Naive thymus-derived CD4-positive, alpha-beta T cell (primary cell): ENCODE measurements at regions of chr10 and their contacts with region 1.

Region 1: DNA sequence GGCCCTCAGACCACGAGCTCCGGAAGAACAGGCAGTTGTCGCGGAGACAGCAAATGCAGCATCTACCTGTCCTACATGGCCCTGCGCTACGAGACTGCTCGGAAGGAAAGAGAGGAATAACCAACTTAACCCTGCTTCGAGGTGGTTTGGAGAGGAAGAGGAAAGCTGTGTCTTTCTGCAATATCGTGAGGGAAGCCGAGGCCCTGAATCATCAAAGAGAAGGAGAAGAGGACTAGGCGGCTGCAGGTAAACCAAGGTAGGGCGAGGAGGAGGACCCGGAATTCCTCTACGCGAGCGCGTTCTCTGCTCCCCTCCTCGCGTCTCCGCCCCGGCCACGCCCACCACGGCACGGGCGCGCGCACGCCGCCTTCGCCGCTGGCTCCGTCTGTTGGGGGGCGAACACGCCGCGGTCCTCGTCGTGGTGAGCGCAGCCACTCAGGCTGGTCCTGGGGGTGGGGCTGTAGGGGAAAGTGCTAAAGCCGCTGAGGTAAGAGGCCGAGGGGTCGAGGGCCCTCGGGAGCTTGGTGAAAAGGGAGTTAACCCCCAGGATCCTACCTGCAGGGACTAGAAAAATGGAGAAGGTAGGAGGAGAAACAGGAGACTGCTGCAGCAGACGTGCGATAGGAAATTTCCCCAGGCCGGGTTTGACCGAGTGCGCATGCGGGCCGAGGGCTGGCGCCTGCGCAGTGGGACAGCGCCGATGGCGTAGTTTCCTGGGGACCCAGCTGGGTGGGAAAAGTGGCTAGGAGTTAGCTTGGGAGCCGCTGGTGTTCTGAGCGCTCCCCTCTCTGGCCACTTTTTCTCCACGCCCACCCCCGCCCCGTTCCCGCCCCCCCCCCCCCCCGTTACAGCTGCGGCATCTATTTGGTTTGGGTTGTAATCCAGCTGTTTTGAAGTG is at the starts of genes ANAPC16 and ASCC1:
- DNase-seq: peak; percentile 90 to 99 (median 97)
- ATAC-seq: peak; percentile 95
- H3K4me3 ChIP-seq: peak within 1 kb of the TSS; percentile 66
- H3K4me3 Mint-ChIP-seq: peak within 1 kb of the TSS; percentile 84 to 100 (median 97)
- H3K27ac ChIP-seq: peak within 1 kb of the TSS; percentile 95
- H3K27ac Mint-ChIP-seq: peak within 1 kb of the TSS; percentile 93 to 100 (median 99)
- H3K4me1 ChIP-seq: peaks cover 22 to 49% of the 10 kb centered on the region in 2 donors
- H3K4me1 Mint-ChIP-seq: peaks cover 14 to 62% (median 47%) of the 10 kb centered on the region in 7 donors
- H3K27me3 ChIP-seq: no peaks in the 10 kb centered on the region
- H3K27me3 Mint-ChIP-seq: no peaks in the 10 kb centered on the region
- total RNA-seq, gene ANAPC16: 85.5 to 131 (median 105) TPM
- total RNA-seq, gene ASCC1: 19.4 to 33.1 (median 24.2) TPM

Region 2: GRCh38 chr10:71359364-71360046 is 856.4 kb before region 1 on chr10:
- CTCF ChIA-PET with region 1: no interaction called
- POLR2A ChIA-PET with region 1: no interaction called
- intact Hi-C with region 1: no loop called
- DNase-seq: no peak
- ATAC-seq: peak; percentile 67
- H3K4me3 ChIP-seq: no peak overlapping the region
- H3K4me3 Mint-ChIP-seq: no peak overlapping the region
- H3K27ac ChIP-seq: no peak overlapping the region
- H3K27ac Mint-ChIP-seq: no peak overlapping the region
- H3K4me1 ChIP-seq: no peaks in the 10 kb centered on the region
- H3K4me1 Mint-ChIP-seq: peaks cover 0 to 4% (median 0%) of the 10 kb centered on the region in 7 donors
- H3K27me3 ChIP-seq: no peaks in the 10 kb centered on the region
- H3K27me3 Mint-ChIP-seq: no peaks in the 10 kb centered on the region

Region 3: GRCh38 chr10:72048450-72049124 is 167.3 kb before region 1 on chr10:
- CTCF ChIA-PET with region 1: interaction called, 28 read pairs
- POLR2A ChIA-PET with region 1: interaction called, 3 read pairs
- intact Hi-C with region 1: loop called in 1 of 2 experiments (anchors 2 kb)
- DNase-seq: peak; percentile 68 to 88 (median 83)
- ATAC-seq: peak; percentile 99
- H3K4me3 ChIP-seq: no peak overlapping the region
- H3K4me3 Mint-ChIP-seq: no peak overlapping the region
- H3K27ac ChIP-seq: no peak overlapping the region
- H3K27ac Mint-ChIP-seq: peak overlapping the region in 6 of 9 donors; percentile 5 to 67 (median 32)
- H3K4me1 ChIP-seq: no peaks in the 10 kb centered on the region
- H3K4me1 Mint-ChIP-seq: peaks cover 7 to 10% (median 8%) of the 10 kb centered on the region in 7 donors
- H3K27me3 ChIP-seq: no peaks in the 10 kb centered on the region
- H3K27me3 Mint-ChIP-seq: no peaks in the 10 kb centered on the region

Region 4: GRCh38 chr10:72126184-72126871 is 89.6 kb before region 1 on chr10:
- CTCF ChIA-PET with region 1: interaction called, 6 read pairs
- POLR2A ChIA-PET with region 1: interaction called, 21 read pairs
- intact Hi-C with region 1: no loop called
- DNase-seq: peak in 1 of 9 donors; percentile 16
- ATAC-seq: no peak
- H3K4me3 ChIP-seq: no peak overlapping the region
- H3K4me3 Mint-ChIP-seq: no peak overlapping the region
- H3K27ac ChIP-seq: no peak overlapping the region
- H3K27ac Mint-ChIP-seq: peak overlapping the region in 4 of 9 donors; percentile 5 to 63 (median 18)
- H3K4me1 ChIP-seq: peaks cover 5 to 10% of the 10 kb centered on the region in 2 donors
- H3K4me1 Mint-ChIP-seq: peaks cover 18 to 54% (median 42%) of the 10 kb centered on the region in 7 donors
- H3K27me3 ChIP-seq: no peaks in the 10 kb centered on the region
- H3K27me3 Mint-ChIP-seq: no peaks in the 10 kb centered on the region

Region 5: GRCh38 chr10:72248468-72249151 is 32.7 kb after region 1 on chr10:
- CTCF ChIA-PET with region 1: interaction called, 3 read pairs
- POLR2A ChIA-PET with region 1: interaction called, 22 read pairs
- intact Hi-C with region 1: loop called (anchors 1 kb)
- DNase-seq: peak; percentile 34 to 92 (median 83)
- ATAC-seq: peak; percentile 95
- H3K4me3 ChIP-seq: peak overlapping the region; percentile 59
- H3K4me3 Mint-ChIP-seq: peak overlapping the region; percentile 80 to 98 (median 84)
- H3K27ac ChIP-seq: peak overlapping the region; percentile 68
- H3K27ac Mint-ChIP-seq: peak overlapping the region; percentile 87 to 99 (median 96)
- H3K4me1 ChIP-seq: peaks cover 62 to 89% of the 10 kb centered on the region in 2 donors
- H3K4me1 Mint-ChIP-seq: peaks cover 63 to 89% (median 83%) of the 10 kb centered on the region in 7 donors
- H3K27me3 ChIP-seq: no peaks in the 10 kb centered on the region
- H3K27me3 Mint-ChIP-seq: no peaks in the 10 kb centered on the region

Region 6: GRCh38 chr10:72297968-72298773 is 82.3 kb after region 1 on chr10:
- CTCF ChIA-PET with region 1: no interaction called
- POLR2A ChIA-PET with region 1: interaction called, 12 read pairs
- intact Hi-C with region 1: loop called in 1 of 2 experiments (anchors 1 kb)
- DNase-seq: peak; percentile 68 to 90 (median 78)
- ATAC-seq: peak; percentile 76
- H3K4me3 ChIP-seq: peak overlapping the region; percentile 69
- H3K4me3 Mint-ChIP-seq: peak overlapping the region; percentile 27 to 89 (median 84)
- H3K27ac ChIP-seq: peak overlapping the region; percentile 80
- H3K27ac Mint-ChIP-seq: peak overlapping the region; percentile 97 to 100 (median 99)
- H3K4me1 ChIP-seq: peaks cover 29 to 30% of the 10 kb centered on the region in 2 donors
- H3K4me1 Mint-ChIP-seq: peaks cover 18 to 61% (median 55%) of the 10 kb centered on the region in 7 donors
- H3K27me3 ChIP-seq: no peaks in the 10 kb centered on the region
- H3K27me3 Mint-ChIP-seq: no peaks in the 10 kb centered on the region

Region 7: DNA sequence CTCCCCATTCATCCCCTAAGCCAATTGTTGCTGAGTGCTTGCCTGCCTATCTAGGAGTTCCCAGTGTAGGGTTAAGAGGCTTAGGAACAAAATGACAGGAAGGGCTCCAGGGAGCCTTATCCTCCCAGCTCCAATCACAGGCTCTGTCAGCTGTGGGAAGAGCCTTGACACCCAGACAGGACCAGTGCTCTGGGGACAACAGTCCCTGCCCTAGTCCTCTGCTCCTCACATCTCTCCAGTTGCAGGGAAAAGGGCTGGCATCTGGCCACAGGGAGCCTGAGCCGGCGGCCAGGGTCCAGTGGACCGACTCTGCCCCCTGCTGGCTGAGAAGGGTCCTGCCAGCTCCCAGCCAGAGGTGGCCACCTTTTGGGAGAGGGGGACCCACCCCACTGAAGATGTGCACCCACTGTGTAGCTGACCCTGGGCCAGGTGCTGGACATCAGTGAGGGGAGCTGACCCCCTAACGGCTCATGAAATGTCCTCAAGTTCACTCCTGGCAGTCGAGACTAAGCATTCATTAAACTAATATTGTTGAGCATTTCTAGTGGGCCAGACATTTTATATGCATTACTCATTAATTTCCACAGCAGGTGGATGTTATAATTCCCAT is 121.2 kb after region 1 on chr10:
- CTCF ChIA-PET with region 1: interaction called, 13 read pairs
- POLR2A ChIA-PET with region 1: interaction called, 17 read pairs
- intact Hi-C with region 1: loop called in 1 of 2 experiments (anchors 2 kb)
- DNase-seq: peak; percentile 34 to 77 (median 56)
- ATAC-seq: peak; percentile 25
- H3K4me3 ChIP-seq: no peak overlapping the region
- H3K4me3 Mint-ChIP-seq: peak overlapping the region in 4 of 10 donors; percentile 12 to 93 (median 30)
- H3K27ac ChIP-seq: peak overlapping the region; percentile 79
- H3K27ac Mint-ChIP-seq: peak overlapping the region; percentile 29 to 99 (median 92)
- H3K4me1 ChIP-seq: peaks cover 52 to 58% of the 10 kb centered on the region in 2 donors
- H3K4me1 Mint-ChIP-seq: peaks cover 31 to 66% (median 55%) of the 10 kb centered on the region in 7 donors
- H3K27me3 ChIP-seq: no peaks in the 10 kb centered on the region
- H3K27me3 Mint-ChIP-seq: no peaks in the 10 kb centered on the region